ENCODE measurements at regions of chr1 and their contacts with region 1.

Region 1: DNA sequence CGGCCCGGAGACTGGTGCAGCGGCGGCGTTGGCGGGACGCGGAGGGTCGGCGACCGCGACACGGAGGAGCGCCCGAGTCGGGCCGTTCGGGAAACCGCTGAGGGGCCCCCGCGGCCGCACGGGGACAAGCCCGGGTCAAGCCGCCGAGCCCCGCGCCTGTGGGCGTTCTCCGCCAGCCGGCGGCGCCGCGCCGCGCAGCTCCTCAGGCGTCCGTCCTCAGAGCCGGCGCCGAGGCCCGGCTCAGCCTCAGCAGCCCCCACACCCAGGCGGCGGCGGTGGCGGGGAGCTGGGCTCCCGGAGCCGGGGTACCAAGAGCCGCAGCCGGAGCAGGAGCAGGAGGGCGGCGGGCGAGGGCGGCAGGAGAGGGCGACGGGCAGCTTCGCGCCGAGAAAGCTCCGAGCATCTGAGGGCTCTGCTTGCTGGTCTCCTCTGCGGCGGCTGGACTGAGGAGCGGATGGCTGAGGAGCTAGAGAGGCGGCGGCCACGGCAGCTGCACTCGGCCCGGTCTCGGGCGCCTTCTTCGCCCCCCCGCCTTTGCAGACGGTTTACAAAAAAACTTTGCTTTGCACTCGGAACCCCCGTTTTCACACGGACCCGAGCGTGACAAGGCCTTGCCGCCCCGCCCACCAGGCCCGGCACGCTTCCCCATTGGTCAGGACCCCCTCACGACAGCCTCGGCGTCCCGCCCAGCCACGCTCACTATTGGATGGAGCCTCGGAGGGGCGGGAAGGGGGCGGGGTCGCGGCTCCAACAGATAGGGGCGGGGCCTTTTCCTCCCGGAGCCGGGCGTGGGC is at the start of gene SLC30A1:
- DNase-seq: peak; percentile 99
- H3K4me3 Mint-ChIP-seq: peak within 1 kb of the TSS; percentile 94
- H3K27ac Mint-ChIP-seq: peak within 1 kb of the TSS; percentile 88
- H3K4me1 Mint-ChIP-seq: peaks cover 42% of the 10 kb centered on the region
- H3K27me3 Mint-ChIP-seq: peaks cover under 1% of the 10 kb centered on the region
- total RNA-seq, gene SLC30A1: 10.6 and 12.0 TPM in 2 replicates

Region 2: GRCh38 chr1:211285196-211285595 is 293.6 kb before region 1 on chr1:
- intact Hi-C with region 1: no loop called
- DNase-seq: no peak
- H3K4me3 Mint-ChIP-seq: no peak overlapping the region
- H3K27ac Mint-ChIP-seq: peak overlapping the region; percentile 12
- H3K4me1 Mint-ChIP-seq: no peaks in the 10 kb centered on the region
- H3K27me3 Mint-ChIP-seq: no peaks in the 10 kb centered on the region

Region 3: DNA sequence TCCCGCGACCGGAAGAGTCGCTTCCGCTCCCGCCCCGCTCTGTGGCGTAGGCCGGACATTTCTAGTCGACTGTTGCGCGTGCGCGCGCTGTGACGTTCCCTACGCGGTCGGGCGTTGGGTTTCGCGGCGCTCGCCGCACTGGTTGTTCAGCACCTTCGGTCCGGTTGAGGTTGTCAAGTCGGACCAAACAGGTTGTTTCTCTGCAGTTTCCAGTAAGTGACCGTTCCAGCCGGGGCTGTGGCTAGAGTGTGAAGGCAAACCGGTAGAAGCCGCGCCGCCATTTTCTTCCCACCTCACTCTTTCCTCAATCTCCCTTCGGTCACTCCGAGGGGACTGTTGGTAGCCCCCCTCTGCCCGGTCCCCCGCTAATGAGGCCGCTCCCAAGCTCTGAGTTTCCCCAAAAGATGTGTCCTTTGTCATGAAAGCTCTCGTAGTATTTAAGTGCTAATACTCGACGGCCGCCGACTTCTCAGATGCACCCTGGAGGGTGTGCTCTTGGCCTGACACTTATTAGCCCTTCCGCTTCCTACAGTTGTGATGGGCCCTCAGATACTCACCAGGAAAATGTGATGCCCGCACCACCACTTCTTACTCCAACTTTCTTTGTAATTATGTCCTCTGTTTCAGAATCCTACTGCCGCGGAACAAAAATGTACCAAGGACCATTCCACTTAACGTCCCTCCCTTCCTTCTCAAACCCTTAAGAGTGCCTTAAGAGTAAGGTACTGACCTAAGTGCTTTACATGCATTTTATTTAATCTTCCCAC is 195.9 kb before region 1 on chr1:
- intact Hi-C with region 1: loop called (anchors 2 kb)
- DNase-seq: peak; percentile 77
- H3K4me3 Mint-ChIP-seq: peak overlapping the region; percentile 91
- H3K27ac Mint-ChIP-seq: peak overlapping the region; percentile 89
- H3K4me1 Mint-ChIP-seq: peaks cover 51% of the 10 kb centered on the region
- H3K27me3 Mint-ChIP-seq: peaks cover 8% of the 10 kb centered on the region

Region 4: DNA sequence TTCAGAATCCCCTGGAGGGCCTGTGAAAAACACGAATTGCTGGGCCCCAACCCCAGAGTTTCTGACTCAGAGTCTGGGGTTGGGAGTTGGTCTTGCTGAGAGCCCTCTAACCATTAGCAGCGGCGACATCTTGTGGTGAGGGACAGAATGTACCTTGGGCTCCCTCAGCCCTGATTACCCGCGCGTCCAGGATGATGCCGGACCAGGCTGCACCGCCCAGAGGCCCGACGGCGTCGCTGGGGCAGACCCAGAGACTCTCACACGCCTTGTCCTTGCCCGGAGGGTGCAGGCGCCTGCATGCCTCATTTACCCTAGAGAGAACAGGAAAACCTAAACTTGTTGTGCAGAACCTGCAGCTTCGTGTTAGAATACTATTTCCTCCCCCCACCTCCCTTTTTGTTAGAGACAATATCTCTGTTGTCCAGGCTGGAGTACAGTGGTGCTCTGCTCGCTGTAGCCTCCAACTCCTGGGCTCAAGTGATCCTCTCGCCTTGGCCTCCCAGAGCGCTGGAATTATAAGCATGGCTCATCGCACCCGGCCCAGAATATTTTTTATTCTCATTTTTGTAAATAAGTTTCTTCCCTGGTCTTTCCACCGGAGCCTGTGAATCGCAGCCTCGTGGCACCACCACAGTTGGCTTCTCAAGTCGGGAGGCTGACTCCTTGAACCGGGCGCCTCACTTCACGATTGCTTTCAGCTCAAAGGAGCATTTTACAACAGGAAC is 64.6 kb before region 1 on chr1:
- intact Hi-C with region 1: loop called (anchors 2 kb)
- DNase-seq: peak; percentile 58
- H3K4me3 Mint-ChIP-seq: peak overlapping the region; percentile 66
- H3K27ac Mint-ChIP-seq: peak overlapping the region; percentile 55
- H3K4me1 Mint-ChIP-seq: peaks cover 27% of the 10 kb centered on the region
- H3K27me3 Mint-ChIP-seq: peaks cover 13% of the 10 kb centered on the region

Region 5: GRCh38 chr1:211606914-211607755 is 28.3 kb after region 1 on chr1:
- intact Hi-C with region 1: loop called (anchors 2 kb)
- DNase-seq: no peak
- H3K4me3 Mint-ChIP-seq: peak overlapping the region; percentile 77
- H3K27ac Mint-ChIP-seq: peak overlapping the region; percentile 84
- H3K4me1 Mint-ChIP-seq: peaks cover 25% of the 10 kb centered on the region
- H3K27me3 Mint-ChIP-seq: peaks cover 6% of the 10 kb centered on the region

Region 6: DNA sequence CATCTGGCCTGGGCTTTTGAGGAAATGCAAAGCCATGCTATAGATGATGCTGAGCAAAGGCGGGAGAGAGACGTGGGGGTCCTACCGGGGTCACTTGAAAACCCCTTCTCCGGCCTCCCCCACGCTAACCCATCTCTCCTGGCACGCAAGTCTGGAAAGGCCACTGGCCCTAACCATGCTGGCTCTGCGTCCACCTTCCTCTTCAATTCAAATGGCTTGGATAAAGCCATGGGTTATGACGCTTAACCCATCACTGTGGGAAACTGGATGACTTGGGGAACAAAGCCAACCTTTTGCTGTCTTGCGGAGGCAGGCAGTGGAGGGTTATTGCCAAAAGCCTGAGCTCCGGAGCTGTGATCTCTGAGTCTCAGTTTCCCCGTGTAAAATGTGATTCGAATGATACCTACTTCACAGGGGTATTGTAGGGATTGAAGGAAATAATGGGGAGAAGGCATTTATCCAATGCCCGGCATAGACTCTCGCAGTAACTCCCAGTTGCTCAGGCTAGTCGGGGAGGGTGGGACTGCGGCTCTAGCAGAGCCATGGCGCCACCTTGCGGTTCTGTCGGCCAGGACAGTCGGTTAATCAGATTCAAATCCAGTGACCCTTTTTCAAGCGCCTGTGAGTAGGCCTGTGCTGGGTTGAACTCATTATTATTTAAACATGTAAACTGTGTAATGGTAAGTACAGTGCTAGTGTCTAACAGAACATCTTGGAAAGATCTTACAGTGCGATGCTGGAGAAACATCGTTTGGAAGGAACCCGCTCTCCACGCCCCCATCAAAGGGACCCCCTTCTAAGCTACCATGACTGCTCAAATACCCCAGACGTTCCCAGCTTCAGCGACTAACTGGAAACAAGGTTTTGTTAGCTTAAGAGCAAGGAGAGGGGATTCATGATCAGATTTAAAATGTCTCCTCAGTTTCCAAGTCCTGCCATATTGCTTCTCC is 76.3 kb after region 1 on chr1:
- intact Hi-C with region 1: loop called (anchors 1 kb)
- DNase-seq: peak; percentile 63
- H3K4me3 Mint-ChIP-seq: no peak overlapping the region
- H3K27ac Mint-ChIP-seq: no peak overlapping the region
- H3K4me1 Mint-ChIP-seq: peaks cover 6% of the 10 kb centered on the region
- H3K27me3 Mint-ChIP-seq: peaks cover 3% of the 10 kb centered on the region

Region 7: GRCh38 chr1:211680752-211681327 is 102.0 kb after region 1 on chr1:
- intact Hi-C with region 1: no loop called
- DNase-seq: peak; percentile 64
- H3K4me3 Mint-ChIP-seq: no peak overlapping the region
- H3K27ac Mint-ChIP-seq: peak overlapping the region; percentile 86
- H3K4me1 Mint-ChIP-seq: peaks cover 14% of the 10 kb centered on the region
- H3K27me3 Mint-ChIP-seq: no peaks in the 10 kb centered on the region

Region 8: GRCh38 chr1:211800925-211801607 is 222.2 kb after region 1 on chr1:
- intact Hi-C with region 1: no loop called
- DNase-seq: no peak
- H3K4me3 Mint-ChIP-seq: no peak overlapping the region
- H3K27ac Mint-ChIP-seq: no peak overlapping the region
- H3K4me1 Mint-ChIP-seq: no peaks in the 10 kb centered on the region
- H3K27me3 Mint-ChIP-seq: no peaks in the 10 kb centered on the region

Region 9: GRCh38 chr1:211830330-211831142 is 251.7 kb after region 1 on chr1 and contains the start of gene LPGAT1:
- intact Hi-C with region 1: loop called (anchors 5 kb)
- DNase-seq: peak; percentile 65
- H3K4me3 Mint-ChIP-seq: peak within 1 kb of the TSS; percentile 91
- H3K27ac Mint-ChIP-seq: peak within 1 kb of the TSS; percentile 90
- H3K4me1 Mint-ChIP-seq: peaks cover 69% of the 10 kb centered on the region
- H3K27me3 Mint-ChIP-seq: peaks cover 2% of the 10 kb centered on the region
- total RNA-seq, gene LPGAT1: 35.3 and 35.6 TPM in 2 replicates

Region 10: GRCh38 chr1:212857992-212858460 is 1279.2 kb after region 1 on chr1 and contains the start of gene FLVCR1:
- intact Hi-C with region 1: loop called (anchors 5 kb)
- DNase-seq: peak; percentile 96
- H3K4me3 Mint-ChIP-seq: peak within 1 kb of the TSS; percentile 53
- H3K27ac Mint-ChIP-seq: peak within 1 kb of the TSS; percentile 98
- H3K4me1 Mint-ChIP-seq: peaks cover 15% of the 10 kb centered on the region
- H3K27me3 Mint-ChIP-seq: peaks cover 2% of the 10 kb centered on the region
- total RNA-seq, gene FLVCR1: 18.5 and 18.7 TPM in 2 replicates

Measured in activated T-helper 1 cell treated with anti-CD3 and anti-CD28 coated beads, Interleukin-12 subunit alpha, Interleukin-12 subunit beta, Interleukin-2, Interleukin-4 antibody, amounts not matched to agents 30 ng/mL and 10 ng/mL and 1 ng/mL, durations not matched to agents 14 hours and 24 hours and 36 hours (primary cell).